Dorsolateral prefrontal cortex (tissue), 120 donors: ENCODE measurements at regions of chr3 and their contacts with region 1.

Region 1: GRCh38 chr3:129942296-129942695 is 32.2 kb upstream of the TRH start:
- DNase-seq: peak; percentile 40 to 78 (median 62)
- H3K4me3 ChIP-seq: no peak overlapping the region
- H3K27ac ChIP-seq: no peak overlapping the region
- H3K27me3 ChIP-seq: no peaks in the 10 kb centered on the region
- CTCF ChIP-seq: peak; percentile 35 to 92 (median 84)

Region 2: GRCh38 chr3:129809297-129809696 is 133.0 kb before region 1 on chr3:
- intact Hi-C with region 1: no loop called
- DNase-seq: no peak
- H3K4me3 ChIP-seq: no peak overlapping the region
- H3K27ac ChIP-seq: no peak overlapping the region
- H3K27me3 ChIP-seq: no peaks in the 10 kb centered on the region
- CTCF ChIP-seq: no peak

Region 3: GRCh38 chr3:130014526-130014925 is 72.2 kb after region 1 on chr3:
- intact Hi-C with region 1: loop called in 1 of 2 experiments (anchors 5 kb)
- DNase-seq: no peak
- H3K4me3 ChIP-seq: no peak overlapping the region
- H3K27ac ChIP-seq: no peak overlapping the region
- H3K27me3 ChIP-seq: peaks cover 0 to 3% (median 0%) of the 10 kb centered on the region in 45 donors
- CTCF ChIP-seq: no peak

Region 4: DNA sequence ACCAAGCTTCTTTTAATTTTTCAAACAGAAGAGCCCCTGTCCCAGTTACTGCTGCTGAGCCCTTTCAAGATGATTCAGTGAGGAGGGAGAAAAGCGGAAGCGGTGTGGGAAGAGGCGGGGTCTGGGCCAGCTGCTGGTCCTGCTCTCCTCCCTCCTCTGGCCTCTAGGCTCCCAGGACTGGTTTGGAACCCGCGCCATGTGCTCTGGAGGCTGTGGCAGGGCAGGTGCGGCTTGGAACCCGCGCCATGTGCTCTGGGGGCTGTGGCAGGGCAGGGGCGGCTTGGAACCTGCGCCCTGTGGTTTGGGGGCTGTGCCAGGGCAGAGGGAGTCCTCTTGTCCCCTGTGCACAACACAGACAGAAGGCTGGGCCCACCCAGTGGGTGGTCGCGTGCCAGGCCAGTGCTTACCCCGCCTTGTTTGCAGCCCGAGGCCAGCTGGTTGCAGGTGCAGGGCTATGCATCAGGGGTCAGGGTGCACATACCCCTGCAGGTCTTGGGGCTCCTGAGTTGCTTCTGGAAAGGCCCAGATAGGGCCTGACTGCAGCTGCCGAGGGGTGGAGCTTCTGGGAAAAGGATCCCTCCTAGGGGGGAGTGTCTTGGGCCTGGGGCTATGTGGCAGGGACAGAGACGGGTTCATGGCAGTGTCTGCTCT is 151.6 kb after region 1 on chr3:
- intact Hi-C with region 1: loop called (anchors 2 to 5 kb)
- DNase-seq: no peak
- H3K4me3 ChIP-seq: no peak overlapping the region
- H3K27ac ChIP-seq: no peak overlapping the region
- H3K27me3 ChIP-seq: no peaks in the 10 kb centered on the region
- CTCF ChIP-seq: no peak